ENCODE measurements at regions of chr3 and their contacts with region 1.

Region 1: GRCh38 chr3:190120269-190121060 is at the start of gene P3H2:
- DNase-seq: peak; percentile 94
- H3K4me3 Mint-ChIP-seq: peak within 1 kb of the TSS; percentile 63
- H3K27ac Mint-ChIP-seq: peak within 1 kb of the TSS; percentile 13
- H3K4me1 Mint-ChIP-seq: peaks cover 88% of the 10 kb centered on the region
- H3K27me3 Mint-ChIP-seq: peaks cover 21% of the 10 kb centered on the region
- CTCF ChIP-seq: peak; percentile 7
- total RNA-seq, gene P3H2: 5.9 and 7.1 TPM in 2 replicates

Region 2: DNA sequence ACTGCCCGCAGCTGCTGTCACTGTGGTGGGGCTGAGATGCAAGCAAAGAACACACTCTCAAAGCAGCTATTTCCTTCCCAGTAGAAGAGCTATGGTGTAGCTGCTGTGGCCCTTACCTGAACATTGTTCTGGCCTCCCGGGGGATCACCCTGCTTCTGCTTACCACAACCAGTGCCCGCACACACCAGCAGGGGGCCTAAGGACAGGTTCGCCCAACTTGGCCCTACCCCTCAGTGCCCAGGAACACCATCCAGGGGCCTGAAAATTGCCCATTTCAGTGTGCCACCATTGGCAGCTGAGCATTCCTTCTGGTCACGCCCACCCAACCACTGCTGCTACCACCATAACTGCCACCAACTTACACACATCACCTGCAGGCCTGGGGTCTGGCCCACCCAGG is 376.2 kb before region 1 on chr3:
- CTCF ChIA-PET with region 1: no interaction called
- intact Hi-C with region 1: no loop called
- DNase-seq: no peak
- H3K4me3 Mint-ChIP-seq: no peak overlapping the region
- H3K27ac Mint-ChIP-seq: no peak overlapping the region
- H3K4me1 Mint-ChIP-seq: no peaks in the 10 kb centered on the region
- H3K27me3 Mint-ChIP-seq: no peaks in the 10 kb centered on the region
- CTCF ChIP-seq: peak; percentile 60

Region 3: GRCh38 chr3:189937307-189938124 is 182.9 kb before region 1 on chr3:
- CTCF ChIA-PET with region 1: no interaction called
- intact Hi-C with region 1: no loop called
- DNase-seq: peak; percentile 84
- H3K4me3 Mint-ChIP-seq: peak overlapping the region; percentile 16
- H3K27ac Mint-ChIP-seq: peak overlapping the region; percentile 85
- H3K4me1 Mint-ChIP-seq: peaks cover 57% of the 10 kb centered on the region
- H3K27me3 Mint-ChIP-seq: no peaks in the 10 kb centered on the region
- CTCF ChIP-seq: no peak

Region 4: DNA sequence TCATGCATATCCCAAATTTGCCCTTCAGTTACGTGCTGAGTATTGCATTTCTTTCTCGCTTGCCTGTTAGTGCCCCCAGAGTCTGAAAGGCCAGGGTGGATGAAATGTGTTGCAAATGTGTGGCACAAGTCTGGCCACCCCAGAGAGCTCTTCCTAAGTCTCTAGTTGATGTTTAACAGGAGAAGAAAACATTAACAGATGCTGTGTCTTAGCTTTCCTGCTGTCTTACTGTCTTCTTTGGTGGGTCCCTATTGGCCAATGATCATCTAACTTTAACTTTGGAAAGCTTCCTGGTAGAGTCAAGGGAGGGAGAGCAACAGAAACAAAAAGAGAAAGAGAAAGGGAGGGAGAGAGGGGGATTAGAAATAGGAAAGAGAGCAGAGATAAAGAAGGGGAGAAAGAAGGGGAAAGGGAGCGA is 76.9 kb after region 1 on chr3:
- CTCF ChIA-PET with region 1: no interaction called
- intact Hi-C with region 1: loop called (anchors 5 kb)
- DNase-seq: no peak
- H3K4me3 Mint-ChIP-seq: no peak overlapping the region
- H3K27ac Mint-ChIP-seq: no peak overlapping the region
- H3K4me1 Mint-ChIP-seq: peaks cover 9% of the 10 kb centered on the region
- H3K27me3 Mint-ChIP-seq: no peaks in the 10 kb centered on the region
- CTCF ChIP-seq: no peak

Measured in Calu3 (cell line).